Activated T-helper 1 cell treated with anti-CD3 and anti-CD28 coated beads, Interleukin-12 subunit alpha, Interleukin-12 subunit beta, Interleukin-2, Interleukin-4 antibody, amounts not matched to agents 30 ng/mL and 10 ng/mL and 1 ng/mL, durations not matched to agents 14 hours and 24 hours and 36 hours (primary cell): ENCODE measurements at regions of chr10 and their contacts with region 1.

Region 1: GRCh38 chr10:12121673-12122072 is 7.8 kb upstream of the SEC61A2 start:
- DNase-seq: no peak
- H3K4me3 Mint-ChIP-seq: peak overlapping the region; percentile 59
- H3K27ac Mint-ChIP-seq: peak overlapping the region; percentile 95
- H3K4me1 Mint-ChIP-seq: peaks cover 34% of the 10 kb centered on the region
- H3K27me3 Mint-ChIP-seq: no peaks in the 10 kb centered on the region

Region 2: GRCh38 chr10:12042797-12043651 is 78.6 kb before region 1 on chr10 and contains the start of gene UPF2:
- intact Hi-C with region 1: no loop called
- DNase-seq: peak; percentile 94
- H3K4me3 Mint-ChIP-seq: peak within 1 kb of the TSS; percentile 99
- H3K27ac Mint-ChIP-seq: peak within 1 kb of the TSS; percentile 99
- H3K4me1 Mint-ChIP-seq: peaks cover 34% of the 10 kb centered on the region
- H3K27me3 Mint-ChIP-seq: no peaks in the 10 kb centered on the region
- total RNA-seq, gene UPF2: 38.9 and 43.6 TPM in 2 replicates

Region 3: GRCh38 chr10:12091421-12091820 is 30.3 kb before region 1 on chr10:
- intact Hi-C with region 1: no loop called
- DNase-seq: no peak
- H3K4me3 Mint-ChIP-seq: no peak overlapping the region
- H3K27ac Mint-ChIP-seq: no peak overlapping the region
- H3K4me1 Mint-ChIP-seq: no peaks in the 10 kb centered on the region
- H3K27me3 Mint-ChIP-seq: no peaks in the 10 kb centered on the region

Region 4: DNA sequence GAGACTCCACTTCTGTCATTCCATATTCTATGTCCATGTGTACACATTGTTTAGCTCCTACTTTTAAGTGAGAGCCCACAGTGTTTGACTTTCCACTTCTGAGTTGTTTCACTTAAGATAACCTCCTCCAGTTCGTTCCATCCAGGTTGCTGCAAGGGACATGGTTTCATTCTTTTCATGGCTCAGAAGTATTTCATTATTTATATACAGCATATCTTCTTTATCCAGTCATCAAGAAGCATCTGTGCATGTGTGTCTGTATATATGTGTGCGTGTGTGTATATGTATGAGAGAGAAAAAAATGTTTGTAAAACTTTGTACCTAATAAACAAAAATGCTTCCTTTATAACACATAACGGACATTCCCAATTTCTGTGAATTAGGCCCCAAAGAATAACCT is 14.0 kb after region 1 on chr10:
- intact Hi-C with region 1: no loop called
- DNase-seq: no peak
- H3K4me3 Mint-ChIP-seq: no peak overlapping the region
- H3K27ac Mint-ChIP-seq: no peak overlapping the region
- H3K4me1 Mint-ChIP-seq: peaks cover 19% of the 10 kb centered on the region
- H3K27me3 Mint-ChIP-seq: no peaks in the 10 kb centered on the region

Region 5: DNA sequence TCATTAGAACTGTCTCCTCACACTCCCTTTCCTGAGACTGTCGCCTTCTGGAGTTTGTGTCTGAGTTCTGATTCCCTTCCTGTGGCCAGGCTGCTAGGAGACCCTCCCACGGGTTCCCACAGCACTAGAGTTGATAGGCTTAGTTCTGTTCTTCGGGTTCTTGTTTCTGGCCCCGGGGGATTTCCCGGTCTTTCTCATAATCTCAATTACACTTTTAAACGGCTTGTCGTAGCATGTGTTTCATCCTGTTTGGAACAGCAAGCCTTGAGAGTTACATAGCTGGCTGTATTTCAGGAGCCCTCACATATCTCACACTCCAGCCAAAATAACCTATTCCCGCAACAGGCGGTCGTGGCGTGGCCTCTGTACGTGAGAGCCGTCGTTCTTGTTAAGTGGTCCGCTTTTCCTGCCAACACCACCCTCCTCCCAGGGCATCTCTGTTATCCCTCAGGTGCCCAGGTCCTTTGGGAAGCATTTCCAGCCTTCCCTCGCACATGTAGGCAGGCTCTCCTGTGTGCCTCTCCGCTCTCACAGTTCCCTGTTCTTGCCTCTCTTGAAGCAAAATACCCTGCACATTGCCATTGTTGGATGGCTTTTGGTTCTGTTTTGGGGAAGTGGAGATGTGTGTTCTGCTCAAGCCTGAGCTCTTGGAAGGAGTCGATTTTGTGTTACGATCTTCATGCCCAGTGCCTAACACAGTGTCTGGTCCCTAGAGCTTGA is 120.3 kb after region 1 on chr10:
- intact Hi-C with region 1: loop called (anchors 2 kb)
- DNase-seq: no peak
- H3K4me3 Mint-ChIP-seq: peak overlapping the region; percentile 59
- H3K27ac Mint-ChIP-seq: peak overlapping the region; percentile 80
- H3K4me1 Mint-ChIP-seq: peaks cover 26% of the 10 kb centered on the region
- H3K27me3 Mint-ChIP-seq: no peaks in the 10 kb centered on the region